ENCODE measurements at regions of chr11 and their contacts with region 1.

Region 1: DNA sequence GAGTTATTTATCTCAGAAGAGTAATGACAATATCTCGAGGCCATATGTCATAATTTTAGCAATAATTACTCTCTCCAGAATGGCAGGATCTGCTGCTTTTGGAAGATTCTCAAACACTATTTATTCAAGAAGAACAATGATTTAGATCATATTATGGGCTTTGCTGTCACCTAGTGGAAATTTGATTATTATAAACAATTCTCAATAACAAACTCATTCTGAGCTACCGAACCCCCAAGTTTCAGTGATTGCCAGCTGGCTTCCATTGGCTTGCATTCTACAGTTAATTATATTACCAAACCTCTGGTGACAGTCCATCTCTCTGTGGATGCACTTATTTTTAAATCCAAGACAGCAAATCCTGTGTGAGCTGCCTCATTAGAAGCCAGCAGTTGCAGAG is 27.9 kb upstream of the SLC36A4 start:
- DNase-seq: no peak
- H3K4me3 Mint-ChIP-seq: no peak overlapping the region
- H3K27ac Mint-ChIP-seq: no peak overlapping the region
- H3K4me1 Mint-ChIP-seq: no peaks in the 10 kb centered on the region
- H3K27me3 Mint-ChIP-seq: peaks cover 4% of the 10 kb centered on the region

Region 2: GRCh38 chr11:92941676-92942571 is 283.7 kb before region 1 on chr11:
- CTCF ChIA-PET with region 1: interaction called, 37 read pairs
- DNase-seq: no peak
- H3K4me3 Mint-ChIP-seq: no peak overlapping the region
- H3K27ac Mint-ChIP-seq: no peak overlapping the region
- H3K4me1 Mint-ChIP-seq: no peaks in the 10 kb centered on the region
- H3K27me3 Mint-ChIP-seq: no peaks in the 10 kb centered on the region